Activated CD4-positive, alpha-beta memory T cell treated with anti-CD3 and anti-CD28 coated beads, Interleukin-2, amount 10 ng/mL, durations not matched to agents 7 days and 5 days (primary cell): ENCODE measurements at regions of chr1 and their contacts with region 1.

Region 1: DNA sequence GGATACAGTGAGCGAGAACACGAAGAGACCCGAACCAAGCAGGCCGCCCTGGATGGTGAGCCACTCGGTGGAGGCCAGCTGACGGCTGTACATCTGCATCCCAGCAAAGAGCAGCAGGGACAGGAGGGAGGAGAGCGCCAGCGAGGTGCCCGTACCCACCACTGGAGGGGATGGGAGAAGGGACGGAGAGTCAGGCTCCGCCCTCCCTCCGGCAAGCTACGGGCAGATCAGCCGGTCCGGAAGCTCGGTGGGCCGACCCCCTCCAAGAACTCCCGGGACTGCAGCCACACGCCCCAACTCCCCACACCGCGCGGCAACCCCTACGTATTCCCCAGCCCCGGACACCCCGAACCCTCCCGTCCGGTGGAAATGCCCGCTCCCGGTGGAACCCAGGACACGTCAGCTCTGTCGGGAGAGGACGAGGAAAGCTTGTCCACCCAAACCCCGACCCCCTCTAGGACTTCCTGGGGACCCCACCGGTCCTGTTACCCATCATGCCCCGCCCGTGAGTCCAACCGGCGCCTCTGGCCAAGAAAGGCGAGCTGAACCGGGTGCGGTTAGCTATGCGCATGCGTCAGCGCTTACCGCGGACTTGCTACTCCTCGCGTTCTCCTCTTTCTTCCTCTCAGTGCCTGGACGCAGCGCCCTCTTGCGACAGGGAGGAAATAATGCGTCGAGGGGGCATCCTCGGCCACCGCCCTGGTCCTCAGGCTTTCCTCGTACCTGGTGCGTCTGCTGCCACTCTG is at the start of gene KRTCAP2:
- DNase-seq: peak; percentile 96
- H3K4me3 Mint-ChIP-seq: peak within 1 kb of the TSS; percentile 97
- H3K27ac Mint-ChIP-seq: peak within 1 kb of the TSS; percentile 96
- H3K4me1 Mint-ChIP-seq: peaks cover 64% of the 10 kb centered on the region
- H3K27me3 Mint-ChIP-seq: no peaks in the 10 kb centered on the region
- total RNA-seq, gene KRTCAP2: 203 to 224 TPM

Region 2: DNA sequence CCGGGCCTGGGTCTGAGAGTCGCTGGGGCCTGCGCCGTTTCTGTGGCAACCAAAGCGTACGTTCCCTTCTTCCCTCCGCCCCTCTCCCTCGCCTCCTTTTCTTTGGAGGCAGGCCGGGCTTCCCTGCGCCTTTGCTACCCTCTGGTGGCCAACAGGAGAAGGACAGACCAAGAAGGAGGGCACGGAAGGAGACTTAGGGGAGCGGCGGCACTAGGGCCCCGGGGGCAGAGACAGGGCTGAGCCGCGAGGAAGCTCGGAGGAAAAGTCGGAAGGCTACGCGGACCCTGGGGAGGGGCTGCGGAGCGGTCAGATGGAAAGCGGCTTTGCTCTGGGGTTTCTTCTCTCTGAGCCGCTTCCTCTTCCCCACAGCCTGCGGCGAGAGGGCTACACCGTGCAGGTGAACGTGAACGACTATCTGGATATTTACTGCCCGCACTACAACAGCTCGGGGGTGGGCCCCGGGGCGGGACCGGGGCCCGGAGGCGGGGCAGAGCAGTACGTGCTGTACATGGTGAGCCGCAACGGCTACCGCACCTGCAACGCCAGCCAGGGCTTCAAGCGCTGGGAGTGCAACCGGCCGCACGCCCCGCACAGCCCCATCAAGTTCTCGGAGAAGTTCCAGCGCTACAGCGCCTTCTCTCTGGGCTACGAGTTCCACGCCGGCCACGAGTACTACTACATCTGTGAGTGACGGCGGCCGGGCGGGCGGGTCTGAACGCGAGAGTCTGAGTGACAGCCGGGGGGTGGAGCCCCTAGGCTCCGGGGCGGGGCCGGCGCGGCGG is 88.0 kb before region 1 on chr1:
- CTCF ChIA-PET with region 1: interaction called, 209 read pairs
- POLR2A ChIA-PET with region 1: interaction called, 18 read pairs
- DNase-seq: peak; percentile 93
- H3K4me3 Mint-ChIP-seq: peak overlapping the region; percentile 90
- H3K27ac Mint-ChIP-seq: peak overlapping the region; percentile 82
- H3K4me1 Mint-ChIP-seq: peaks cover 44% of the 10 kb centered on the region
- H3K27me3 Mint-ChIP-seq: peaks cover 35% of the 10 kb centered on the region

Region 3: GRCh38 chr1:155099331-155099730 is 73.6 kb before region 1 on chr1:
- CTCF ChIA-PET with region 1: interaction called, 25 read pairs
- POLR2A ChIA-PET with region 1: interaction called, 3 read pairs
- DNase-seq: no peak
- H3K4me3 Mint-ChIP-seq: no peak overlapping the region
- H3K27ac Mint-ChIP-seq: no peak overlapping the region
- H3K4me1 Mint-ChIP-seq: no peaks in the 10 kb centered on the region
- H3K27me3 Mint-ChIP-seq: peaks cover 27% of the 10 kb centered on the region

Region 4: DNA sequence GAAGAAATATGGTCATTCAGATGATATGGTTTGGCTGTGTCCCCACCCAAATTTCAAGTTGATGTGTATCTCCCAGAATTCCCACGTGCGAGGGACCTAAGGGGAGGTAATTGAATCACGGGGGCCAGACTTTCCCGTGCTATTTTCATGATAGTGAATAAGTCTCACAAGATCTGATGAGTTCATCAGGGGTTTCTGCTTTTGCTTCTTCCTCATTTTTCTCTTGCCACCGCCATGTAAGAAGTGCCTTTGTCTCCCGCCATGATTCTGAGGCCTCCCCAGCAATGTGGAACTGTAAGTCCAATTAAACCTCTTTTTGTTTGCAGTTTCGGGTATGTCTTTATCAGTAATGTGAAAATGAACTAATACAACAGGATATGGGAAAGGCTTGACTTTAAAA is 31.2 kb before region 1 on chr1:
- CTCF ChIA-PET with region 1: interaction called, 28 read pairs
- POLR2A ChIA-PET with region 1: interaction called, 21 read pairs
- DNase-seq: no peak
- H3K4me3 Mint-ChIP-seq: no peak overlapping the region
- H3K27ac Mint-ChIP-seq: no peak overlapping the region
- H3K4me1 Mint-ChIP-seq: peaks cover 33% of the 10 kb centered on the region
- H3K27me3 Mint-ChIP-seq: peaks cover 20% of the 10 kb centered on the region

Region 5: GRCh38 chr1:155208541-155209311 is 35.8 kb after region 1 on chr1 and contains the start of gene MTX1:
- CTCF ChIA-PET with region 1: interaction called, 18 read pairs
- POLR2A ChIA-PET with region 1: interaction called, 17 read pairs
- DNase-seq: peak; percentile 89
- H3K4me3 Mint-ChIP-seq: peak within 1 kb of the TSS; percentile 85
- H3K27ac Mint-ChIP-seq: peak within 1 kb of the TSS; percentile 80
- H3K4me1 Mint-ChIP-seq: peaks cover 40% of the 10 kb centered on the region
- H3K27me3 Mint-ChIP-seq: no peaks in the 10 kb centered on the region
- total RNA-seq, gene MTX1: 41.2 to 43.1 TPM

Region 6: GRCh38 chr1:155244368-155245162 is 71.7 kb after region 1 on chr1:
- CTCF ChIA-PET with region 1: interaction called, 26 read pairs
- POLR2A ChIA-PET with region 1: interaction called, 6 read pairs
- DNase-seq: peak; percentile 99
- H3K4me3 Mint-ChIP-seq: peak overlapping the region; percentile 74
- H3K27ac Mint-ChIP-seq: peak overlapping the region; percentile 88
- H3K4me1 Mint-ChIP-seq: peaks cover 54% of the 10 kb centered on the region
- H3K27me3 Mint-ChIP-seq: peaks cover 2% of the 10 kb centered on the region